ENCODE measurements at regions of chr2 and their contacts with region 1.

Region 1: DNA sequence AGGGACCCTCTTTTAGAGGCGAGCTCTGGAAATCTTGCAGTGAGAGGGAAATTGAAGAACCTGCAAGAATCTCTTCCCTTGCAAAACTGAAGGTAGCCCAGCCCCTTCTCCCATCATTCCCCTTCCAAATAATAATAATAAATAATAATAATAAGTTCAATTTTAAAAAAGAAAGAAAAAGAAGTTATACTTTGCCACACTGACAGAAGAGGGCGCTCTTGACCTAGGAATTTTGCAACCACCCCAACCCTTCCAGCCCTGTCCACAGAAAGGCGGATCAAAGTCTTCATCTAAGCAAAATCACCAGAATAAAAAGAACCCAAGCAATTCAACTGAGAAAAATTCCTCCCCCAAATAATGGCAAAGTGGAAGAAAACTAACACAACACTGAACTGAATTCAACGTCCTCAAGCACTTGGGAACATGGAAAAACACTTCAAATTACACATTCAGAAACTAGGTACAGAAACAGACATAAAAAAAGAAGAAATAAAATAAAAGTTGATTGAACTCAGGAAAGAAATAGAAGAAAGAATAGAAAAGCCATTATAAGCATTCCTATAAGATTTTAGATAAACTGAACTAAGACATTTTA is 98.9 kb upstream of the GLS start:
- DNase-seq: peak; percentile 43
- H3K4me3 ChIP-seq: no peak overlapping the region
- H3K27ac ChIP-seq: no peak overlapping the region
- H3K4me1 ChIP-seq: peaks cover 5% of the 10 kb centered on the region
- H3K27me3 ChIP-seq: no peaks in the 10 kb centered on the region
- CTCF ChIP-seq: peak; percentile 19 to 63

Region 2: DNA sequence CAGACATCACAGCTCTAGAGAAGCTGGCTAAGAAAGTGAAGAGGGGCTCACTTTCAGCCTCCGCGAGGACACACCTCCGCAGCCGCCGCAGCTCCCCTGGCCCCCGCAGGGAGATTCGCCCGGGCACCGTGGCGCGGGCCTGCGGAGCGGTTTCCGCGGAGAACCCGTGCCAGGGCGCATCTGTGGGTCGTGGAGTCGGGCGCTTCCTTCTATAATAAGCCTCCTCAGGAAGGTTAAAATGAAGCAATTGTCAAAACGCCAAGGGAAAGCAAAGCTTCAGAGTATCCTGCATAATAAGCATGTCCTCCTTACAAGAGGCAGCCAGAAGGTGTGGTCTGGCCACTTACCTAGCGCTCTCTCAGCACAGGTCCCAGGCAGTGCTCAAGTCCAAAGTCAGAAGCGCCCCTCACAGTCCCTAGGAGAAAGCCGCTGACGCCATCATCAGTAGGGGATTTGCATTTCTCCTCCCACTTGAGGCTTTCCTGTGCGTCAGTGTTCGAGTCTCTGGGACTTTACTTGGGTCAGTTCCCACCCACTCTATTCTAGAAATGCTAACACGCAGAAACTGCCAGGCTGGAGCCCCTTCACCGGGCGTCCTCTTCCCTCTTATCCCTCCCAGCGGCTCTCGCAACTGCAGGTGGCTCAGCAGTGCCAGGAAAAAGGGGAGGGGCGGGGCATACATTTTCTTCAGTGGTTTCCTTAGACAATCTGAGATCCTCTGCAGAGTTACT is 369.1 kb after region 1 on chr2 and contains the start of gene STAT4:
- CTCF ChIA-PET with region 1: no interaction called
- dilution Hi-C with region 1: no loop called
- in situ Hi-C with region 1: no loop called
- intact Hi-C with region 1: loop called (anchors 1 kb)
- DNase-seq: peak; percentile 64
- H3K4me3 ChIP-seq: peak within 1 kb of the TSS; percentile 47 to 59 (median 52)
- H3K27ac ChIP-seq: no peak within 1 kb of the TSS
- H3K4me1 ChIP-seq: peaks cover 21% of the 10 kb centered on the region
- H3K27me3 ChIP-seq: no peaks in the 10 kb centered on the region
- CTCF ChIP-seq: no peak
- total RNA-seq, gene STAT4: 2.5 to 4.5 TPM

Region 3: DNA sequence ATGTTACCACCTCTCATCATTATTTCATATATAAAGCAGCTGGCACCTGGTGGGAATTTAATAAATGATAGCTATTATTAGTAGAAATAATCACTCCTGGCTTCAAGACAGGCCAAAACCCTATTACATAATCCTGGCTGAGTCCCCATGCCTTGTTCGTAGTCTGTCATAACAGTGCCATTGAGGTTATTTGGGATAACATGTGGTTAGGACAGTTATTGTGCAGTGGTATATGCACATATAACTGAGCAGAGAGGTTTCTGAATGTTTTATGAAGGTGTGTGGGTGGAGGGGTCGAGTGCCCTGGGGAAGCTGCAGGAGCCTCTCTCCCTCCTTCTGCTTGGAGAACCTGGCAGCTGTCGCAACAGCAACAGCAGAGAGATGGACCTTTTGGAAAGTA is 733.9 kb after region 1 on chr2:
- CTCF ChIA-PET with region 1: no interaction called
- dilution Hi-C with region 1: no loop called
- in situ Hi-C with region 1: no loop called
- intact Hi-C with region 1: loop called (anchors 10 kb)
- DNase-seq: no peak
- H3K4me3 ChIP-seq: no peak overlapping the region
- H3K27ac ChIP-seq: no peak overlapping the region
- H3K4me1 ChIP-seq: no peaks in the 10 kb centered on the region
- H3K27me3 ChIP-seq: no peaks in the 10 kb centered on the region
- CTCF ChIP-seq: no peak

Measured in mammary epithelial cell (primary cell).